ENCODE measurements at regions of chr6 and their contacts with region 1.

Region 1: GRCh38 chr6:153032255-153032882 is 29.9 kb upstream of the MTRF1L start:
- DNase-seq: peak; percentile 20
- H3K27ac ChIP-seq: no peak overlapping the region
- CTCF ChIP-seq: peak; percentile 63

Region 2: GRCh38 chr6:152897799-152898399 is 134.5 kb before region 1 on chr6:
- CTCF ChIA-PET with region 1: no interaction called
- POLR2A ChIA-PET with region 1: no interaction called
- DNase-seq: peak; percentile 72
- H3K27ac ChIP-seq: no peak overlapping the region
- CTCF ChIP-seq: peak; percentile 82

Region 3: GRCh38 chr6:152957796-152958195 is 74.6 kb before region 1 on chr6:
- CTCF ChIA-PET with region 1: no interaction called
- POLR2A ChIA-PET with region 1: no interaction called
- DNase-seq: no peak
- H3K27ac ChIP-seq: no peak overlapping the region
- CTCF ChIP-seq: no peak

Region 4: GRCh38 chr6:153108315-153108714 is 75.9 kb after region 1 on chr6:
- CTCF ChIA-PET with region 1: interaction called, 20 read pairs
- POLR2A ChIA-PET with region 1: no interaction called
- DNase-seq: no peak
- H3K27ac ChIP-seq: no peak overlapping the region
- CTCF ChIP-seq: peak; percentile 39